Activated CD4-positive, alpha-beta T cell treated with anti-CD3 and anti-CD28 coated beads for 36 hours (primary cell): ENCODE measurements at regions of chr9 and their contacts with region 1.

Region 1: GRCh38 chr9:120842690-120843499 is at the start of gene PSMD5:
- DNase-seq: peak; percentile 99
- ATAC-seq: peak; percentile 89
- H3K4me3 Mint-ChIP-seq: peak within 1 kb of the TSS; percentile 98
- H3K27ac Mint-ChIP-seq: peak within 1 kb of the TSS; percentile 91
- H3K4me1 Mint-ChIP-seq: peaks cover 70% of the 10 kb centered on the region
- H3K27me3 Mint-ChIP-seq: no peaks in the 10 kb centered on the region
- total RNA-seq, gene PSMD5: 53.5 to 58.3 TPM

Region 2: GRCh38 chr9:120714088-120714845 is 128.6 kb before region 1 on chr9 and contains the start of gene MEGF9:
- CTCF ChIA-PET with region 1: no interaction called
- POLR2A ChIA-PET with region 1: no interaction called
- intact Hi-C with region 1: loop called in 1 of 2 experiments (anchors 5 kb)
- DNase-seq: peak; percentile 99
- ATAC-seq: peak; percentile 98
- H3K4me3 Mint-ChIP-seq: peak within 1 kb of the TSS; percentile 84
- H3K27ac Mint-ChIP-seq: peak within 1 kb of the TSS; percentile 74
- H3K4me1 Mint-ChIP-seq: peaks cover 34% of the 10 kb centered on the region
- H3K27me3 Mint-ChIP-seq: no peaks in the 10 kb centered on the region
- total RNA-seq, gene MEGF9: 3.3 to 3.6 TPM

Region 3: DNA sequence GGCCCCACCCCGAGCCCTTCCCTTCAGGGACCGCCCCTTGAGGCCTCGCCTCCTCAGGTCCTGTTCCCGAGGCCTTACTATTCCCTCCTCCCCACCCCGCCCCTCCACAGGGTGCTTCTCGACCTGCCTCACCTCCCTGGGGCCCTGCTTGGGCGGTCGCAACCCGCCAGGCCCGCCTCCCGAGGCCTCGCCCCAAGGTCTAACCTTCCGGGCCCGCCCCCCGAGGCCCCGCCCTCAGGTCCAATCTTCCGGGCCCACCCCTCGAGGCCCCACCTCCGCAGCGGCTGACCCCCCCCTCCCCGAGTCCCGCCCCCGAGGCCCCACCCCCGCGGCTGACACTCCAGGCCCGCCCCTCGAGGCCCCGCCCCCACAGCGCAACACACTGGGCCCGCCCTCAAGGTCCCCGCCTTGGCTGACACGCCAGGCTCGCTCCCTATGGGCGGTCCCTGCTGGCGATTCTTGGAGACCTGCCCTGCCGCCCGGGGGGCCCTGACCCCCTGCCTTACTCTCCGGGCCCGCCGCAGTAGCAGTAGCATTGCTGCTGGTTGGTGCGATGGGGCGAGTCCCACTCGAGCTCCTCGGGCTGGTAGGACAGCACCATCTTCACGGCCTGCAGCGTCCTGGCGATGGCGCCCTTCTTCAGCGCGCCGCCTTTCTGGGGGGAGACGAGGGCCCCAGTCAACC is 25.9 kb after region 1 on chr9:
- CTCF ChIA-PET with region 1: interaction called, 3 read pairs
- POLR2A ChIA-PET with region 1: interaction called, 7 read pairs
- intact Hi-C with region 1: loop called (anchors 1 kb)
- DNase-seq: peak; percentile 99
- ATAC-seq: peak; percentile 94
- H3K4me3 Mint-ChIP-seq: peak overlapping the region; percentile 64
- H3K27ac Mint-ChIP-seq: peak overlapping the region; percentile 70
- H3K4me1 Mint-ChIP-seq: peaks cover 40% of the 10 kb centered on the region
- H3K27me3 Mint-ChIP-seq: no peaks in the 10 kb centered on the region

Region 4: GRCh38 chr9:120916588-120916987 is 73.7 kb after region 1 on chr9:
- CTCF ChIA-PET with region 1: interaction called, 3 read pairs
- POLR2A ChIA-PET with region 1: interaction called, 10 read pairs
- intact Hi-C with region 1: no loop called
- DNase-seq: peak; percentile 8
- ATAC-seq: no peak
- H3K4me3 Mint-ChIP-seq: peak overlapping the region; percentile 34
- H3K27ac Mint-ChIP-seq: peak overlapping the region; percentile 67
- H3K4me1 Mint-ChIP-seq: peaks cover 87% of the 10 kb centered on the region
- H3K27me3 Mint-ChIP-seq: no peaks in the 10 kb centered on the region

Region 5: GRCh38 chr9:121074635-121075385 is 231.9 kb after region 1 on chr9 and contains the start of gene CNTRL:
- CTCF ChIA-PET with region 1: no interaction called
- POLR2A ChIA-PET with region 1: no interaction called
- intact Hi-C with region 1: loop called (anchors 1 to 10 kb)
- DNase-seq: peak; percentile 98
- ATAC-seq: peak; percentile 89
- H3K4me3 Mint-ChIP-seq: peak within 1 kb of the TSS; percentile 96
- H3K27ac Mint-ChIP-seq: peak within 1 kb of the TSS; percentile 82
- H3K4me1 Mint-ChIP-seq: peaks cover 45% of the 10 kb centered on the region
- H3K27me3 Mint-ChIP-seq: no peaks in the 10 kb centered on the region
- total RNA-seq, gene CNTRL: 64.1 to 72.2 TPM